ENCODE measurements at regions of chrX and their contacts with region 1.

Region 1: GRCh38 chrX:72276478-72276953 is 532 bp downstream of the RPS4X start:
- DNase-seq: no peak
- ATAC-seq: no peak
- H3K4me3 ChIP-seq: peak overlapping the region; percentile 89 to 94
- H3K4me3 Mint-ChIP-seq: peak overlapping the region; percentile 84
- H3K27ac ChIP-seq: peak overlapping the region; percentile 86 to 89
- H3K27ac Mint-ChIP-seq: peak overlapping the region; percentile 88
- H3K4me1 ChIP-seq: peaks cover 29% of the 10 kb centered on the region
- H3K4me1 Mint-ChIP-seq: peaks cover 45% of the 10 kb centered on the region
- H3K27me3 ChIP-seq: no peaks in the 10 kb centered on the region
- H3K27me3 Mint-ChIP-seq: peaks cover 3% of the 10 kb centered on the region
- CTCF ChIP-seq: no peak

Region 2: GRCh38 chrX:71998836-71999509 is 277.5 kb before region 1 on chrX:
- CTCF ChIA-PET with region 1: no interaction called
- POLR2A ChIA-PET with region 1: no interaction called
- intact Hi-C with region 1: loop called in 1 of 2 experiments (anchors 1 kb)
- DNase-seq: peak in 7 of 9 experiments; percentile 14 to 60 (median 49)
- ATAC-seq: peak; percentile 55
- H3K4me3 ChIP-seq: no peak overlapping the region
- H3K4me3 Mint-ChIP-seq: no peak overlapping the region
- H3K27ac ChIP-seq: no peak overlapping the region
- H3K27ac Mint-ChIP-seq: no peak overlapping the region
- H3K4me1 ChIP-seq: no peaks in the 10 kb centered on the region
- H3K4me1 Mint-ChIP-seq: peaks cover 7% of the 10 kb centered on the region
- H3K27me3 ChIP-seq: no peaks in the 10 kb centered on the region
- H3K27me3 Mint-ChIP-seq: peaks cover 5% of the 10 kb centered on the region
- CTCF ChIP-seq: peak; percentile 59

Region 3: GRCh38 chrX:72181178-72182125 is 95.1 kb before region 1 on chrX and contains the start of gene PIN4:
- CTCF ChIA-PET with region 1: interaction called, 5 read pairs
- POLR2A ChIA-PET with region 1: interaction called, 10 read pairs
- intact Hi-C with region 1: loop called (anchors 1 to 2 kb)
- DNase-seq: peak; percentile 65 to 94 (median 82)
- ATAC-seq: peak; percentile 87
- H3K4me3 ChIP-seq: peak within 1 kb of the TSS; percentile 70 to 83
- H3K4me3 Mint-ChIP-seq: no peak within 1 kb of the TSS
- H3K27ac ChIP-seq: peak within 1 kb of the TSS; percentile 57 to 63
- H3K27ac Mint-ChIP-seq: peak within 1 kb of the TSS; percentile 13
- H3K4me1 ChIP-seq: peaks cover 25% of the 10 kb centered on the region
- H3K4me1 Mint-ChIP-seq: peaks cover 14% of the 10 kb centered on the region
- H3K27me3 ChIP-seq: no peaks in the 10 kb centered on the region
- H3K27me3 Mint-ChIP-seq: no peaks in the 10 kb centered on the region
- CTCF ChIP-seq: no peak
- total RNA-seq, gene PIN4: 0.35 to 1.1 TPM

Region 4: DNA sequence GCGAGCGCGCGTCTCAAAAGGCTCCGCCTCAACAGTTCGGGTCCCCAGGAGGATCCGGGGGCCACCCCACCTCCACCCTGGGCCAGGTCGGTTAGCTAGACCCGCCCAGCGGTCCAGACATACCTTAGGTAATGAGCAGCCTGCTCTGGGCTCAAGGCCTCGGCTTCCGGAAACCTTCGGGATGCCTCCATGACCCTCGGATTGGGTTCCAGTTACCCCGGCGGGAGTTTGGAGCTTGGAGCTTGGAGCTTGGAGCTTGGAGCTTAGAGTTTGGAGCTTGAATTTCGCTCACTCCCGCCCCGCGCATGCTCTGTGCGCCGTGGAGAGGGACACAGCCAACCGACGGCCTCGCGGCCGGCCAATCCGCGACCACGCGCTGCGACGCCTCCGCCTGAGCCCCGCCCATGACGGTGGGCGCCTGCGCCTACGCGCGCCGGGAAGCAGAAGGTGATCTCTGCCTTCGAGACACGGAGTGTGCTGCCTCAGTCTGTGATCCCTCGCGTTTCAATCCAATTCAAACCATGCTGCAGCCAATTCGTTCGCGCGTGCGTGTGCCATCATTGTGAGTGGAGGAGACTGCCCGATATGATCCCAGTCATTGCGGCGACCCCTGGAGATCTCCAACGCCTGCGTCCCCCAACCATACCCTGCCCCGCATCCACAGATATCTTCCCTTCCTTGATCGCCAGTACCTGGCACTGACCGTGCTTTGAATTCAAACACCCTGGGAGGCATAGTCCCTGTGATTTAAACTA is 37.6 kb before region 1 on chrX and contains the start of gene ERCC6L:
- CTCF ChIA-PET with region 1: interaction called, 6 read pairs
- POLR2A ChIA-PET with region 1: interaction called, 10 read pairs
- intact Hi-C with region 1: loop called (anchors 2 to 5 kb)
- DNase-seq: peak; percentile 65 to 91 (median 79)
- ATAC-seq: peak; percentile 99
- H3K4me3 ChIP-seq: peak within 1 kb of the TSS; percentile 34 to 53
- H3K4me3 Mint-ChIP-seq: peak within 1 kb of the TSS; percentile 75
- H3K27ac ChIP-seq: no peak within 1 kb of the TSS
- H3K27ac Mint-ChIP-seq: peak within 1 kb of the TSS; percentile 64
- H3K4me1 ChIP-seq: peaks cover 5% of the 10 kb centered on the region
- H3K4me1 Mint-ChIP-seq: peaks cover 6% of the 10 kb centered on the region
- H3K27me3 ChIP-seq: no peaks in the 10 kb centered on the region
- H3K27me3 Mint-ChIP-seq: no peaks in the 10 kb centered on the region
- CTCF ChIP-seq: no peak
- total RNA-seq, gene ERCC6L: 0.11 TPM

Region 5: GRCh38 chrX:72245461-72246089 is 30.9 kb before region 1 on chrX:
- CTCF ChIA-PET with region 1: interaction called, 6 read pairs
- POLR2A ChIA-PET with region 1: interaction called, 10 read pairs
- intact Hi-C with region 1: no loop called
- DNase-seq: peak in 7 of 9 experiments; percentile 10 to 62 (median 42)
- ATAC-seq: no peak
- H3K4me3 ChIP-seq: no peak overlapping the region
- H3K4me3 Mint-ChIP-seq: no peak overlapping the region
- H3K27ac ChIP-seq: no peak overlapping the region
- H3K27ac Mint-ChIP-seq: no peak overlapping the region
- H3K4me1 ChIP-seq: no peaks in the 10 kb centered on the region
- H3K4me1 Mint-ChIP-seq: no peaks in the 10 kb centered on the region
- H3K27me3 ChIP-seq: no peaks in the 10 kb centered on the region
- H3K27me3 Mint-ChIP-seq: no peaks in the 10 kb centered on the region
- CTCF ChIP-seq: peak; percentile 52

Region 6: GRCh38 chrX:72306851-72307645 is 30.5 kb after region 1 on chrX:
- CTCF ChIA-PET with region 1: no interaction called
- POLR2A ChIA-PET with region 1: interaction called, 10 read pairs
- intact Hi-C with region 1: no loop called
- DNase-seq: peak in 4 of 9 experiments; percentile 13 to 50 (median 32)
- ATAC-seq: peak; percentile 41
- H3K4me3 ChIP-seq: peak overlapping the region; percentile 35 to 47
- H3K4me3 Mint-ChIP-seq: peak overlapping the region; percentile 85
- H3K27ac ChIP-seq: no peak overlapping the region
- H3K27ac Mint-ChIP-seq: no peak overlapping the region
- H3K4me1 ChIP-seq: peaks cover 24% of the 10 kb centered on the region
- H3K4me1 Mint-ChIP-seq: peaks cover 30% of the 10 kb centered on the region
- H3K27me3 ChIP-seq: peaks cover 15 to 19% of the 10 kb centered on the region in 2 experiments
- H3K27me3 Mint-ChIP-seq: peaks cover 47% of the 10 kb centered on the region
- CTCF ChIP-seq: no peak

Region 7: GRCh38 chrX:72466493-72466892 is 190.0 kb after region 1 on chrX:
- CTCF ChIA-PET with region 1: no interaction called
- POLR2A ChIA-PET with region 1: no interaction called
- intact Hi-C with region 1: no loop called
- DNase-seq: no peak
- ATAC-seq: no peak
- H3K4me3 ChIP-seq: no peak overlapping the region
- H3K4me3 Mint-ChIP-seq: no peak overlapping the region
- H3K27ac ChIP-seq: no peak overlapping the region
- H3K27ac Mint-ChIP-seq: no peak overlapping the region
- H3K4me1 ChIP-seq: no peaks in the 10 kb centered on the region
- H3K4me1 Mint-ChIP-seq: no peaks in the 10 kb centered on the region
- H3K27me3 ChIP-seq: no peaks in the 10 kb centered on the region
- H3K27me3 Mint-ChIP-seq: no peaks in the 10 kb centered on the region
- CTCF ChIP-seq: no peak

Region 8: DNA sequence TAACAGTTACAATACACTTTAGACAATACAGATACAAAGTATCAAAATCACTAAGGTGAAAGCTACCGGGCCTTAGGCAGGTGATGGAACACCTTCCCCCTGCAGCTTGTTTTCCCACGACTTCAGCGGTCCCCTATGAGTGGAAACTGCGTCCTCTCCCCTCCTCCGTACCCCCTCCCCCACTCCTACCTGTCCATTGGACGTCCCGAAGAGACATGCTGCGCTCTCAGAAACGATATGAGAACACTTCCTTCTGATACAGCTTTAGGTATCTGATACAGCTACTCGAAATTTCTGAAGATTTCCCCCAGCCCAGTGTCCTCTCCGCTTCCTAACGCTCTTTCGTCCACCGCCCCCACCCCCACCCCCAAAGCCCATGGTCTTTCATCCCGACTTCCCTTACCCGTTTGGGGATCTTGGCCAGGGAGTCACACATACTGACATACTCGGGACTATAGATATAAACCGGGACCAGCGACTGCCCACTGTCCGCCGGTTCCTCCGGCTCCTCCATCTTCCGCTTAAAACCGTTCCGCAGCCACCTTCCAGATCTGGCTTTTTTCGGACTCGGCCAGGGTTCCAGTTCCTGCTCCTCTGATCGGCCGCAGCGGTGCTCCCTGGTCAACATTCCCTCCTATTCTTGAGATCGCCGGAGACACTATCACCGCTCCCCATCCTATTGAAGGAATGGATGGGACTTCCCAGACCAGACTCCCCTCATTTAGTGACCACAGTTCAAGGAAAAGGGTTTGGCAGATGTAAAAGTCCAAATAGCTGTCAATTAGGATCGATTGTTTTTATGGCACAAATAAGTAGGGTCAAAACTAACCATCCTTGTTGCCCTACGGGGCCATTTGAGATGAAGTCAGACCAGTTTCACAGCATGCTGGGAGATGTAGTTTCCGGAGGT is 296.0 kb after region 1 on chrX and contains the start of gene HDAC8:
- CTCF ChIA-PET with region 1: no interaction called
- POLR2A ChIA-PET with region 1: interaction called, 4 read pairs
- intact Hi-C with region 1: loop called (anchors 5 to 10 kb)
- DNase-seq: peak in 8 of 9 experiments; percentile 10 to 76 (median 46)
- ATAC-seq: peak; percentile 88
- H3K4me3 ChIP-seq: peak within 1 kb of the TSS; percentile 82 to 96
- H3K4me3 Mint-ChIP-seq: peak within 1 kb of the TSS; percentile 96
- H3K27ac ChIP-seq: peak within 1 kb of the TSS; percentile 41 to 69
- H3K27ac Mint-ChIP-seq: peak within 1 kb of the TSS; percentile 88
- H3K4me1 ChIP-seq: no peaks in the 10 kb centered on the region
- H3K4me1 Mint-ChIP-seq: peaks cover 11% of the 10 kb centered on the region
- H3K27me3 ChIP-seq: no peaks in the 10 kb centered on the region
- H3K27me3 Mint-ChIP-seq: no peaks in the 10 kb centered on the region
- CTCF ChIP-seq: no peak
- total RNA-seq, gene HDAC8: 5.7 to 6.8 TPM

Region 9: DNA sequence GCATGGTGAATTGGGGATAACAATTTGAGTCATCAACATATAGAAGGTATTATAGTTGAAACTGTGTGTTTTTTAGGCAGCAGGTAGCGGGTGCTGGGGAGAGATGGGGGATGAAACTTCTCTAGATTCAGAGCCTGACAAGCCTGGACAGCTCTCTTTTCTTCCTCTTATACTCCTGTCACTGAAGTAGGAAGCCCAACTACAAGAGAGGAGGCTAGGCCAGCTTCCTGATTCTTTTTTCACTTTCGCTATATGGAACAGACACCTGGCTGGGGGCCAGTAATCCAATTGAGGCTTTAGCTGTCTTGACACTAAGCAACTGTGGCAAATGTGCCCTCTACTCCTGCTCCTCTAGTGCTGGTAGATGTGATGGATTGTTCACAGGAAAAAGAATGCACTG is 368.4 kb after region 1 on chrX:
- CTCF ChIA-PET with region 1: no interaction called
- POLR2A ChIA-PET with region 1: no interaction called
- intact Hi-C with region 1: no loop called
- DNase-seq: no peak
- ATAC-seq: no peak
- H3K4me3 ChIP-seq: no peak overlapping the region
- H3K4me3 Mint-ChIP-seq: no peak overlapping the region
- H3K27ac ChIP-seq: no peak overlapping the region
- H3K27ac Mint-ChIP-seq: no peak overlapping the region
- H3K4me1 ChIP-seq: no peaks in the 10 kb centered on the region
- H3K4me1 Mint-ChIP-seq: no peaks in the 10 kb centered on the region
- H3K27me3 ChIP-seq: no peaks in the 10 kb centered on the region
- H3K27me3 Mint-ChIP-seq: no peaks in the 10 kb centered on the region
- CTCF ChIP-seq: no peak

Measured in CD8-positive, alpha-beta T cell (primary cell).